Mammary epithelial cell (primary cell): ENCODE measurements at regions of chr9 and their contacts with region 1.

Region 1: GRCh38 chr9:32823551-32823950 is 40.2 kb downstream of the TMEM215 start:
- DNase-seq: no peak
- H3K4me3 ChIP-seq: no peak overlapping the region
- H3K27ac ChIP-seq: no peak overlapping the region
- H3K4me1 ChIP-seq: no peaks in the 10 kb centered on the region
- H3K27me3 ChIP-seq: no peaks in the 10 kb centered on the region
- CTCF ChIP-seq: no peak

Region 2: GRCh38 chr9:32787816-32788215 is 35.7 kb before region 1 on chr9:
- CTCF ChIA-PET with region 1: no interaction called
- dilution Hi-C with region 1: loop called (anchors 5 kb)
- in situ Hi-C with region 1: no loop called
- intact Hi-C with region 1: no loop called
- DNase-seq: no peak
- H3K4me3 ChIP-seq: no peak overlapping the region
- H3K27ac ChIP-seq: no peak overlapping the region
- H3K4me1 ChIP-seq: peaks cover 4% of the 10 kb centered on the region
- H3K27me3 ChIP-seq: peaks cover 22% of the 10 kb centered on the region
- CTCF ChIP-seq: no peak

Region 3: GRCh38 chr9:33517373-33517772 is 693.8 kb after region 1 on chr9:
- CTCF ChIA-PET with region 1: no interaction called
- dilution Hi-C with region 1: no loop called
- in situ Hi-C with region 1: no loop called
- intact Hi-C with region 1: no loop called
- DNase-seq: peak; percentile 51
- H3K4me3 ChIP-seq: no peak overlapping the region
- H3K27ac ChIP-seq: no peak overlapping the region
- H3K4me1 ChIP-seq: peaks cover 20% of the 10 kb centered on the region
- H3K27me3 ChIP-seq: no peaks in the 10 kb centered on the region
- CTCF ChIP-seq: peak; percentile 38 to 62